Endothelial cell of umbilical vein (primary cell): ENCODE measurements at regions of chr9 and their contacts with region 1.

Region 1: DNA sequence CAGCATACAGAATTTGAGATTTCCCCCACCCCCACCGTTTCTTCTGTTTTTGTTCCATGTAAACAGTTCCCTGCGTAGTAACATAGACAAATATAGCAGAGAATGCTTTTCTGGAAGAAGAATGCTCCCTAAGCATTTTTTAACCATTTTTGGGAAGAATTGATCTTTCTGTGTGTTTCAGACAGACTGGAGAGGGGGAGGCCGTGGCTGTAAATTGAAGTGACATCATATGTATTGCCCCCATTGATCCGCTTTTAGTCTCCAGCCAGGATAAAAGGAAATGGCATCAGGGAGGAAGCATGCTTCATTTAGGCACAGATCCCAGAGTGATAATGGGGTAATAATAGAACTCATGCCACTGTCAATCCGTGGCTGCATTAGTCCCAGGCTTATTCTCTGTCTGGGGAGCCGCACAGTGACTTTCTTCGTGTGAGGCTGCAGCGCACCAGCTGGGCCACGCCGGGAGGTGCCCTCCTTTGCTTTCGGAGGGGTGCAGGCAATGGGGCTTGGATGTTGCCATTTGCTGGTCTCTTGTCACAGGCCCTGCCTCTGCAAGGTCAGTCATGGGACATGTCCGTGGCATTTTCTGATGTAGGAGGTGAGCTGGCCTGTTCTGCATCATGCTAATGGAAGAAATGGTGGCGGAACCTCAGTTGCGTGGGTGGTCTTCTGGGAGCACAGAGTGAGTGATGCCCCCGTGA is 261.5 kb downstream of the FANCC start:
- DNase-seq: peak; percentile 74
- H3K4me3 ChIP-seq: no peak overlapping the region
- H3K27ac ChIP-seq: peak overlapping the region; percentile 72
- H3K4me1 ChIP-seq: peaks cover 18% of the 10 kb centered on the region
- H3K27me3 ChIP-seq: no peaks in the 10 kb centered on the region
- CTCF ChIP-seq: no peak
- POLR2A ChIP-seq: no peak

Region 2: GRCh38 chr9:94663140-94663539 is 392.9 kb before region 1 on chr9:
- CTCF ChIA-PET with region 1: no interaction called
- POLR2A ChIA-PET with region 1: no interaction called
- dilution Hi-C with region 1: no loop called
- intact Hi-C with region 1: loop called (anchors 5 kb)
- DNase-seq: no peak
- H3K4me3 ChIP-seq: no peak overlapping the region
- H3K27ac ChIP-seq: no peak overlapping the region
- H3K4me1 ChIP-seq: no peaks in the 10 kb centered on the region
- H3K27me3 ChIP-seq: peaks cover 9 to 18% of the 10 kb centered on the region in 2 experiments
- CTCF ChIP-seq: no peak
- POLR2A ChIP-seq: no peak

Region 3: GRCh38 chr9:94867281-94867841 is 188.6 kb before region 1 on chr9:
- CTCF ChIA-PET with region 1: no interaction called
- POLR2A ChIA-PET with region 1: no interaction called
- dilution Hi-C with region 1: no loop called
- intact Hi-C with region 1: no loop called
- DNase-seq: peak; percentile 93
- H3K4me3 ChIP-seq: peak overlapping the region in 1 of 3 experiments; percentile 16
- H3K27ac ChIP-seq: peak overlapping the region; percentile 90
- H3K4me1 ChIP-seq: peaks cover 47% of the 10 kb centered on the region
- H3K27me3 ChIP-seq: no peaks in the 10 kb centered on the region
- CTCF ChIP-seq: no peak
- POLR2A ChIP-seq: no peak